GM12878 (cell line): ENCODE measurements at regions of chr20 and their contacts with region 1.

Region 1: GRCh38 chr20:47220161-47220582 is 136.3 kb downstream of the ZMYND8 start:
- DNase-seq: no peak
- ATAC-seq: peak; percentile 87
- H3K4me3 ChIP-seq: no peak overlapping the region
- H3K27ac ChIP-seq: no peak overlapping the region
- H3K4me1 ChIP-seq: no peaks in the 10 kb centered on the region; the same call in 1 of the 2 replicates
- H3K27me3 ChIP-seq: no peaks in the 10 kb centered on the region
- CTCF ChIP-seq: peak; percentile 35 to 74 (median 64); a peak in 5 of 6 replicates
- EP300 ChIP-seq: no peak
- POLR2A ChIP-seq: no peak
- RAD21 ChIP-seq: peak; percentile 57

Region 2: GRCh38 chr20:47205577-47206498 is 14.3 kb before region 1 on chr20:
- CTCF ChIA-PET with region 1: interaction called, 14 read pairs
- POLR2A ChIA-PET with region 1: no interaction called
- RAD21 ChIA-PET with region 1: no interaction called
- SMC1A ChIA-PET with region 1: interaction called, 3 read pairs
- in situ Hi-C with region 1: no loop called
- intact Hi-C with region 1: no loop called
- DNase-seq: peak; percentile 31
- ATAC-seq: peak; percentile 91
- H3K4me3 ChIP-seq: no peak overlapping the region
- H3K27ac ChIP-seq: no peak overlapping the region
- H3K4me1 ChIP-seq: no peaks in the 10 kb centered on the region; the same call in 1 of the 2 replicates
- H3K27me3 ChIP-seq: no peaks in the 10 kb centered on the region
- CTCF ChIP-seq: peak; percentile 62 to 76 (median 64)
- EP300 ChIP-seq: no peak
- POLR2A ChIP-seq: no peak
- RAD21 ChIP-seq: peak; percentile 41; the same call in 1 of the 2 replicates

Region 3: GRCh38 chr20:47357296-47358035 is 137.3 kb after region 1 on chr20:
- CTCF ChIA-PET with region 1: no interaction called
- POLR2A ChIA-PET with region 1: no interaction called
- RAD21 ChIA-PET with region 1: no interaction called
- SMC1A ChIA-PET with region 1: no interaction called
- in situ Hi-C with region 1: no loop called
- intact Hi-C with region 1: no loop called
- DNase-seq: no peak
- ATAC-seq: peak; percentile 71
- H3K4me3 ChIP-seq: peak overlapping the region; percentile 67
- H3K27ac ChIP-seq: peak overlapping the region; percentile 99
- H3K4me1 ChIP-seq: peaks cover 46% of the 10 kb centered on the region
- H3K27me3 ChIP-seq: no peaks in the 10 kb centered on the region
- CTCF ChIP-seq: no peak
- EP300 ChIP-seq: peak in 1 of 2 experiments; percentile 49; a peak in 1 of 4 replicates
- POLR2A ChIP-seq: peak; percentile 90
- RAD21 ChIP-seq: no peak